ENCODE measurements at regions of chr12 and their contacts with region 1.

Region 1: GRCh38 chr12:20601668-20602280 is 93.4 kb upstream of the SLCO1C1 start:
- DNase-seq: no peak
- ATAC-seq: peak in 3 of 4 donors; percentile 53 to 68 (median 63)
- H3K4me3 ChIP-seq: no peak overlapping the region
- H3K27ac ChIP-seq: peak overlapping the region in 1 of 4 donors; percentile 53
- H3K4me1 ChIP-seq: peaks cover 0 to 4% (median 0%) of the 10 kb centered on the region in 3 donors
- H3K27me3 ChIP-seq: no peaks in the 10 kb centered on the region
- CTCF ChIP-seq: peak in 2 of 4 donors; percentile 15 to 32

Region 2: GRCh38 chr12:19915392-19916195 is 686.2 kb before region 1 on chr12:
- intact Hi-C with region 1: loop called in 1 of 3 experiments (anchors 10 kb)
- DNase-seq: peak in 1 of 6 donors; percentile 16
- ATAC-seq: peak; percentile 78 to 91 (median 88)
- H3K4me3 ChIP-seq: no peak overlapping the region
- H3K27ac ChIP-seq: no peak overlapping the region
- H3K4me1 ChIP-seq: peaks cover 0 to 30% (median 6%) of the 10 kb centered on the region in 3 donors
- H3K27me3 ChIP-seq: no peaks in the 10 kb centered on the region
- CTCF ChIP-seq: peak in 3 of 4 donors; percentile 41 to 57 (median 46)

Measured in pancreas (tissue), 10 donors.